A673 (cell line): ENCODE measurements at regions of chr11 and their contacts with region 1.

Region 1: GRCh38 chr11:106794058-106794457 is 224.2 kb downstream of the GUCY1A2 start:
- DNase-seq: no peak
- H3K4me3 ChIP-seq: no peak overlapping the region
- H3K27ac ChIP-seq: no peak overlapping the region
- H3K4me1 ChIP-seq: no peaks in the 10 kb centered on the region
- H3K27me3 ChIP-seq: no peaks in the 10 kb centered on the region
- CTCF ChIP-seq: no peak

Region 2: DNA sequence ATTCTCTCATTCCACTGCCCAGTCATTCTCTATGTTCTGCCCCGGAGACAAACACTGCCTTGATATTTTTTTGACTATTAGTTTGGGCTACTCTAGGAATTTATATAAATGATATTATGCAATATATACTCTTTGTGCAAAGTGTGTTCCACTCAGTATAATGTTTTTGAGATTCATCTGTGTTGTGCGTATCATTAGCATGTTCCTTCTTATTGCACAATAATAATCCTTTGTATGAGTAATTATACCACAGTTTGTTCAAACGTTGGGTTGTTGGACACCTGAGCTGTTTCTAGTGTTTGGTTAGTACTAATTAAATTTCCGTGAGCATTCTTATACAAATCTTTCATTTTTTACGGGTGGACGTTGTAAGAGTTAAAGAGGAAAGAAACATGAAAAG is 166.4 kb before region 1 on chr11:
- CTCF ChIA-PET with region 1: no interaction called
- POLR2A ChIA-PET with region 1: interaction called, 10 read pairs
- intact Hi-C with region 1: no loop called
- DNase-seq: no peak
- H3K4me3 ChIP-seq: no peak overlapping the region
- H3K27ac ChIP-seq: no peak overlapping the region
- H3K4me1 ChIP-seq: no peaks in the 10 kb centered on the region
- H3K27me3 ChIP-seq: no peaks in the 10 kb centered on the region
- CTCF ChIP-seq: no peak